Posterior cingulate gyrus (tissue), 11 donors: ENCODE measurements at regions of chr3 and their contacts with region 1.

Region 1: DNA sequence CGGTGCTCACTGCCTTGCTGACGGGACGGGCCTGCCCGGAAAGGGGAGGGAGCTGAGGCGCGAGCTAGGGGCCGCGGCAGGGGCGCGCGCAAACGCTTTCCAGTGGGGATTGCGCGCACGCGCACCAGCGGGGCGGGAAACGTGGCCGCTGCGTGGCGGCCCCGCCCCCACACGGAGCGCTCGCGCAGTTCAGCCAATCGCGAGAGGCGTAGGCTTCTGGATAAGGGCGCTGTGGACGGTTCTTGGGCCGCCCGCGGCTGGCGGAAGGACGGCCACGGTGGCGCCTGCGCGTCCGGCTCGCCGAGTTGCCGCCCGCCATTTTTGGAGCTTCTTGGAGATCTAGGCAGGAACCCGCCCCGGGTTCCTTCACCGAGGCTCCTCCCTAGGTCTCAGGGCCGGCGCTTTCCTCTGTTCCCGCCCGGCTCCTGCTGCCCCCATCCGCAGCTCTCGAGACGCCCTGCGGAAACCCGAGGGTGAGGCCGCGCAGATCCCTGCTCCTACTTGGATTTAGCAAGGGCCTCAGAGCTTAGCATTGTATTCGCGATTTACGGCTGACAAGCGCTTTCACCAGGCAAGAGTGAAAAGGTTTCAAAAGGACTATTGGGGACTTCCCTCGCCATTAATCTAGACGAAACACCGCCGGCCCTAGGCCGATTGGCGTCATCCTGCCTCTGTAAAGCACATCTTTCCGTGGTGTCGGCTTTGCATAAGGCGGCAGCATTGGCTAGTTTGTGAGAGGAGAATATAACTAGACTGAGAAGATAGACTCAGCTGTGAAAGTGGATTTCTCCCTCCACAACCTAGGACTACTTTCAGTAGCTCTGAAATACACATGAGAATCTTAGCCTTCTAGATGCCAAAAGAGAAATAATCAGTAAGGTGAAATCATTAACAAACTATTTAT is 496 bp upstream of the STAG1 start:
- DNase-seq: peak; percentile 97 to 100 (median 98)

Region 2: GRCh38 chr3:135965506-135966270 is 787.0 kb before region 1 on chr3 and contains the start of gene PPP2R3A:
- intact Hi-C with region 1: loop called (anchors 5 kb)
- DNase-seq: peak; percentile 74 to 98 (median 86)

Region 3: GRCh38 chr3:136196401-136197158 is 556.1 kb before region 1 on chr3:
- intact Hi-C with region 1: loop called (anchors 2 kb)
- DNase-seq: peak; percentile 93 to 99 (median 96)

Region 4: DNA sequence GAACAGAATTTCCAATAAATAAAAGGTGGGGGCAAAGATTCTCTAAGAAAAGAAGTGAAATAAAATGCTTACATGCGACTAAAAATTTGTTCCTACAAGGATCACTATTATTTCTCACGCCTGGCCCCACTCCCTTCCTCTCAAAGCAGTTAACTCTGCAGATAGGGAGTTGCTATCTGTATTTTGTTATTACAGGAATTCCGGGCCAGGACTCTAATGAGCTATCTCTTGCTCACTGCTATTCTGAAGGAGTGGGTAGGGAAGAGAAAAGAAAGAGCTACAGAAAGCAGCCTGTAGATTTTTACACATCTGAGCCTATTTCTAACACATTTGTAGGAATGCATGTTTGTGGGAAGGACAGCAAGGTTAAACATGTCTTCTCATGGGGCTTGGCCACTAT is 362.1 kb before region 1 on chr3:
- intact Hi-C with region 1: loop called (anchors 2 kb)
- DNase-seq: no peak

Region 5: GRCh38 chr3:136861890-136862616 is 109.4 kb after region 1 on chr3 and contains the start of gene NCK1:
- intact Hi-C with region 1: loop called (anchors 1 kb)
- DNase-seq: peak; percentile 99 to 100 (median 100)

Region 6: GRCh38 chr3:136909187-136909586 is 156.5 kb after region 1 on chr3:
- intact Hi-C with region 1: no loop called
- DNase-seq: no peak